PC-9 (cell line): ENCODE measurements at regions of chr1 and their contacts with region 1.

Region 1: GRCh38 chr1:207711285-207711684 is 40.6 kb upstream of the CD46 start:
- DNase-seq: peak; percentile 7 to 54
- H3K4me3 ChIP-seq: no peak overlapping the region
- H3K27ac ChIP-seq: no peak overlapping the region
- H3K4me1 ChIP-seq: peaks cover 21% of the 10 kb centered on the region
- H3K27me3 ChIP-seq: no peaks in the 10 kb centered on the region
- CTCF ChIP-seq: 0 out of 2 replicates have a peak, but pooled peaks have one; percentile 21

Region 2: GRCh38 chr1:207032528-207033017 is 678.7 kb before region 1 on chr1 and contains the start of gene C1orf116:
- CTCF ChIA-PET with region 1: no interaction called
- POLR2A ChIA-PET with region 1: no interaction called
- intact Hi-C with region 1: no loop called
- DNase-seq: peak; percentile 88 to 90
- H3K4me3 ChIP-seq: peak within 1 kb of the TSS; percentile 50
- H3K27ac ChIP-seq: peak within 1 kb of the TSS; percentile 83
- H3K4me1 ChIP-seq: peaks cover 80% of the 10 kb centered on the region
- H3K27me3 ChIP-seq: no peaks in the 10 kb centered on the region
- CTCF ChIP-seq: no peak
- total RNA-seq, gene C1orf116: 30.2 and 36.7 TPM in 2 replicates

Region 3: GRCh38 chr1:207321079-207321789 is 390.1 kb before region 1 on chr1 and contains the start of gene CD55:
- CTCF ChIA-PET with region 1: no interaction called
- POLR2A ChIA-PET with region 1: no interaction called
- intact Hi-C with region 1: no loop called
- DNase-seq: peak; percentile 98 to 99
- H3K4me3 ChIP-seq: peak within 1 kb of the TSS; percentile 67
- H3K27ac ChIP-seq: peak within 1 kb of the TSS; percentile 87
- H3K4me1 ChIP-seq: peaks cover 47% of the 10 kb centered on the region
- H3K27me3 ChIP-seq: no peaks in the 10 kb centered on the region
- CTCF ChIP-seq: no peak; the same call in 1 of the 2 replicates
- total RNA-seq, gene CD55: 45.9 and 46.4 TPM in 2 replicates

Region 4: GRCh38 chr1:207751790-207752455 is 40.6 kb after region 1 on chr1 and contains the start of gene CD46:
- CTCF ChIA-PET with region 1: no interaction called
- POLR2A ChIA-PET with region 1: no interaction called
- intact Hi-C with region 1: loop called (anchors 5 kb)
- DNase-seq: peak; percentile 97 to 98
- H3K4me3 ChIP-seq: peak within 1 kb of the TSS; percentile 91
- H3K27ac ChIP-seq: peak within 1 kb of the TSS; percentile 96
- H3K4me1 ChIP-seq: peaks cover 79% of the 10 kb centered on the region
- H3K27me3 ChIP-seq: no peaks in the 10 kb centered on the region
- CTCF ChIP-seq: no peak
- total RNA-seq, gene CD46: 149 and 214 TPM in 2 replicates

Region 5: DNA sequence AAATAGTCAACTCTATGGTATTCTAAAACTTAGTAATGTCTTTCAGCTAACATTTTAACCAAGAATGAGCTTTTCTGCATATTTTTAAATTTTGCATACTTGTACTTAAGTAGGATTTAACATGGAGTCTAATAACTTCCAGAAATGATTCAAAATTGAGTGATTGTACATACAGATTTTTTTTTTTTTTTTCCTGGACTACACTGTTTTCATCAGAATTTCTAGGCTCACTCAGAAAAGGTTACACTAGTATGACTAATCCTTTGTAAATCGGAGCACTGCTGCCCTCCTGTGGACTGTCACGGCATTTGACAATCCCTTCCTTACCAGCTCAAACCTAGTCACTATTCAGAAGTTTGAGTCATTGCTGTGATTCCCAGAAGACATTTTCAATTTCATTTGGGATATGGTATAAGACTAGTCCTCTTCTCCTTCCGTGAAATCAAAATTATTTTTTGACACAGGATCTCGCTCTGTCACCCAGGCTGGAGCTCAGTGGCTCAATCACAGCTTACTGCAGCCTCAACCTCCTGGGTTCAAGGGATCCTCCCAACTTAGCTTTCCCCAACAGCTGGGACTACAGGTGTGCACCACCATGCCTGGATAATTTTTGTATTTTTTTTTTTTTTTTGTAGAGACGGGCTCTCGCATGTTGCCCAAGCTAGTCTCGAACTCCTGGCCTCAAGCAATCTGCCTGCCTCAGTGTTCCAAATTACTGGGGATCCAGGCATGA is 86.1 kb after region 1 on chr1:
- CTCF ChIA-PET with region 1: no interaction called
- POLR2A ChIA-PET with region 1: no interaction called
- intact Hi-C with region 1: loop called (anchors 2 kb)
- DNase-seq: peak; percentile 76 to 79
- H3K4me3 ChIP-seq: no peak overlapping the region
- H3K27ac ChIP-seq: peak overlapping the region; percentile 32; the same call in 1 of the 2 replicates
- H3K4me1 ChIP-seq: no peaks in the 10 kb centered on the region
- H3K27me3 ChIP-seq: no peaks in the 10 kb centered on the region
- CTCF ChIP-seq: peak; percentile 87